Posterior cingulate gyrus (tissue), 11 donors: ENCODE measurements at regions of chr1 and their contacts with region 1.

Region 1: DNA sequence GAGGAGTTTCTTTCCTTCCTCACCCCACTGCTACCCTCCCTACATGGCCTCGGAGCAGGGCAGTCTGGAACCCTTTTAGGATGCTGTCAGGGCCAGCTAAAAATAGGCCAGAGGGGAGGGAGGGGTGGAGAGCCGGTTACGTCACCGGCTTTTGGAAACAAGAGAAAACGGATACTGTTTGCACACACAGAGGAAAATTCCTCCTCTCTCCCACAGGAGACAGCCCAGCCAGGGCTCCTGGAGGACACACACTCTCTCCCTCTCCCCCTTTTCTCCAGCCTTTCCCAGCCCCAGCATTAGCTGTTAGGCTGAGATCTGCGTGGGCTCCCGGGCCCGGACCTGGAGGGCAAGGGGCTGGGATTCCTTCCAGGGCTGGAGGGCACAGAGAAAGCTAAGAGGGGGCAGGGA is 20.0 kb upstream of the ALDH4A1 start:
- DNase-seq: peak in 9 of 10 donors; percentile 48 to 94 (median 76)

Region 2: DNA sequence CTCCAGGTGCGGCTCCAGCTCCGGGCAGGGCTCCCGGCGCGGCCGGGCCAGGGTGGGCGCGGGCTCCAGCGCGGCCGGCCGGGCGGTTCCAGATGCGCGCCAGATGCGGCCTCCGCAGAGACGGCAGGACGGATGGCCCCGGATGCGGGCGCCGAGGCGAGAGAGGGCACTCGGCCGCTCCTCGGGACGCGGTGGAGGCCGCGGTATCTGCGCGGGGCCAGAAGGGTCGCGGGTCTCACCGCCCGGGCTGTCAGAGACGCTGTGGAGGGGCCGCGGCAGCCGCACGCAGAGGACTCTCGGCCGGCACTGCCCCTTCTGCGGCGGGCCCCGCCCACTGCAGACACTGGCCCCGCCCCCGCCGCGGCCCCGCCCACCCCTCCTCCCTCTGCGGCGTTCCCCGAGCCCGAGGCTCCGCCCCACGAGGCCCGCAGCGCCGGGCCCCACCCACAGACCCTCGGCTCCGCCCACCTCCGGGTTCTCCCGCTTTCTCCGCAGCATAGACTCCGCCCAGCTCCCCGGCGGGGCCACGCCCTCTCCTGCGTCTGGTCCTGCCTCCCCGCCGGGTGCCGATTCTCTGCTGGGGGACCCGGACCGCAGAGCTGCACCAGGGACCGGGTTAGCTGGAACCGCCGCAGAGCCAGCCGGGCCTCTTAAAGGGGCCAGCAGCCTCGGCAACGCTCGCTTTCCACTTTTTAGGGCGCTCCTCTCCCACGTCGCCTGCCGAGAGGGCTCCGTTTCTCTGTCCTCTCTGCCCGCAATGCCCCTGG is 34.2 kb after region 1 on chr1 and contains the start of gene IFFO2:
- intact Hi-C with region 1: loop called (anchors 5 kb)
- DNase-seq: peak; percentile 97 to 100 (median 99)